Stomach (tissue), 19 donors: ENCODE measurements at regions of chr19 and their contacts with region 1.

Region 1: GRCh38 chr19:33143897-33144405 is 12.0 kb downstream of the WDR88 start:
- DNase-seq: peak; percentile 73 to 87
- H3K4me3 ChIP-seq: no peak overlapping the region
- H3K27ac ChIP-seq: no peak overlapping the region
- H3K4me1 ChIP-seq: peaks cover 0 to 7% (median 3%) of the 10 kb centered on the region in 4 donors
- H3K27me3 ChIP-seq: peaks cover 0 to 17% (median 0%) of the 10 kb centered on the region in 3 donors
- CTCF ChIP-seq: peak in 5 of 7 experiments; percentile 79 to 97 (median 93)
- EP300 ChIP-seq: no peak
- POLR2A ChIP-seq: no peak

Region 2: DNA sequence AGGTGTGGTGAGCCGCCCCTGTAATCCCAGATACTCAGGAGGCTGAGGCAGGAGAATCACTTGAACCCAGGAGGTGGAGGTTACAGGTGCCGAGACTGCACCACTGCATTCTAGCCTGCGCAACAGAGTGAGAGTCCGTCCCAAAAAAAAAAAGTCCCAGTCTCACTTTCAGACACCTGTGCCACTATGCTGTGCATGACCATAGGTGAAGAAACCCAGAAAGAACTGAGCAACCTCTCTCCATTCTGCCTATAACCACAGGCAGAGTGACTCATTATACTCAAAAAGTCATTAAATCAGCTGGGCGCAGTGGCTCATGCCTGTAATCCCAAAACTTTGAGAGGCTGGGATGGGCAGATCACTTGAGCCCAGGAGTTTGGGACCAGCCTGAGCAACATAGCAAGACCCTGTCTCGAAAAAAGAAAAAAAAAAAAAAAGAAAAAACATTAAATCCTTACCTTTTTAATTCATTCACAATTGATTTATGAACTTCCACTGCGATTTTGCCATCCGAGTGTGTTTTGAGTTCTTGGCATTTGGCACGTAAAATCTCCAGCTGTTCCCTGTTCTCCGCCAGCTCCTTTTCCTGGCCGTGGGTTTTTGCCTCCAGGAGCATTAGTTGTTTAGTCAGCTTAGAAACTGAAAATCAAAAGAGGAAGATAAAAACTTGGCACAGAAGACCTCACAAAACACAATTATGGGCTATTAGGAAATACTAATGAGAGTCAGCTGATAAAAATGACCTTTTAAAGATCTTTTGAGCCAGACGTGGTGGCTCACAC is 228.9 kb before region 1 on chr19:
- intact Hi-C with region 1: no loop called
- DNase-seq: no peak
- H3K4me3 ChIP-seq: no peak overlapping the region
- H3K27ac ChIP-seq: no peak overlapping the region
- H3K4me1 ChIP-seq: no peaks in the 10 kb centered on the region
- H3K27me3 ChIP-seq: no peaks in the 10 kb centered on the region
- CTCF ChIP-seq: no peak
- EP300 ChIP-seq: no peak
- POLR2A ChIP-seq: no peak

Region 3: DNA sequence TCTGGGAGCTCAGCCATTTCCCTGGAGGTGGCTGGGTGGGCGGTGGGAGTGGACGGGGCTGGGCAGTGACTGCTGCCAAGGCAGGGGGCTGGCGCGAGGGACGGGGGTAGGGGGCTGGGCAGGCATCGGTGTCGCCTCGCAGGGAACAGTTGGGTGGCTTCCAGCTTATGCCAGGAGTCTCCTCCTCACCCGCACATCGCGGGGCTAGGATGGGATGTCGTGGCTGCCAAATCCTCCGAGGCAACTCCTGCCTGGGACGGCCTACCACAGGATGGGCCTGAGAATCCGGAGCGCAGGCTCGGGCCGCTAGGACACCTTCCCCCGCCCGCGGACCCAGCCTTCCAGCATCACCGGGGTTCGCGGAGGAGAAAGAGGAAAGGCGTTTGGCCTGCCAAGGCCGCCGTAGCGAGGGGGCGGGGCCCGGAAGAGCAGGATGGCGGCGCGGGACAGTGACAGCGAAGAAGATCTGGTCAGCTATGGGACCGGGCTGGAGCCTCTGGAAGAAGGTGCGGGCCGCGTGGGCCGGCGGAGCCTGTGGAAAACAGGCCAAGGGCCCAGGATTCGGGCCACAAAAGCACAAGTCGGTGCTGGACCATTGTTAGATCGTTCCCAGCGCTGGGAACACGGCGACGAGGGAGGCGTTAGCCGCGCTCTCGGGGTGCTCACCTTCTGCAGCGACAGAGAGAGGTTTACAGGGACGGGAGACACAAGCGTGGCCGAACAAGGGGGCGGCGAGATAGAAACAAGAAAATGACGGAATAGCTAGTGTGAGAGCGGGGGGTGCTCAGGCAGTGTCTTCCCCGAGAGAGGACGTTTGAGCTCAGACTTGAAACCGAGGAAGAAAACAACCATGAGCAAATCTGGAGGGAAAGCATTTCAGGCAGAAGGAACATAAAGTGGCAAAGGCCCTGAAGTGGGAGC is 62.9 kb before region 1 on chr19 and contains the start of gene GPATCH1:
- intact Hi-C with region 1: no loop called
- DNase-seq: peak; percentile 91 to 95
- H3K4me3 ChIP-seq: peak within 1 kb of the TSS; percentile 75 to 99 (median 88)
- H3K27ac ChIP-seq: peak within 1 kb of the TSS; percentile 65 to 86 (median 82)
- H3K4me1 ChIP-seq: peaks cover 12 to 46% (median 28%) of the 10 kb centered on the region in 4 donors
- H3K27me3 ChIP-seq: no peaks in the 10 kb centered on the region
- CTCF ChIP-seq: no peak
- EP300 ChIP-seq: no peak
- POLR2A ChIP-seq: no peak
- total RNA-seq, gene GPATCH1: 1.2 to 31.5 (median 9.5) TPM

Region 4: DNA sequence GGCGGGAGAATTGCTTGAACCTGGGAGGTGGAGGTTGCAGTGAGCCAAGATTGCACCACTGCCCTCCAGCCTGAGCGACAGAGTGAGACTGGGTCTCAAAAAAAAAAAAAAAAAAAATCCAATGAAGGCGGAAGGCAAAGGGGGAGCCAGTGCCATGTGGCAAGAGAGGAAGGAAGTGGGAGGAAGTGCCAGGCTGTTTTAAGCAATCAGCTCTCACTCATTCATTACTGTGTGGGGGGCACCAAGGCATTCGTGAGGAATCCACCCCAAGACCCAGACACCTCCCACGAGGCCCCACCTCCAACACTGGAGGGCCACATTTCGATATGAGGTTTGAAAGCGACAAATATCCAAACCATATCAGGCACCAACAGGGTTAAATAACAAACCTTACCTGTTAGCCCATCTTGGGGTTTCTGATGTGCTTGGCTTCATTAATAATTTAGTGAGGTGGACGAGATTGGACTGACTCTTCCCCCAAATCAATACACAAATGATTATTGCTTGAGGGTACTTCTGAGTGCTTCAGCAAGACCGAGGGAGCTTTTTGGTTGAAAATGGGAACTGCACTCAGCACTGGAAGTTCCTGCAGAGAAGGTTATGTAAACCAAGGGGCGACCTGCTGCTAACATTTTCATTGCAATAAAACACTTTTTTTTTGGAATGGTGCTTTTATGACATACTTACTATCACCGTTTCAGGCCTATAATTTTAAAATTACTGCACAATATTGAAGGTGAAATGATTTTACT is 42.7 kb after region 1 on chr19:
- intact Hi-C with region 1: loop called (anchors 2 kb)
- DNase-seq: no peak
- H3K4me3 ChIP-seq: no peak overlapping the region
- H3K27ac ChIP-seq: no peak overlapping the region
- H3K4me1 ChIP-seq: peaks cover 0 to 10% (median 8%) of the 10 kb centered on the region in 4 donors
- H3K27me3 ChIP-seq: no peaks in the 10 kb centered on the region
- CTCF ChIP-seq: no peak
- EP300 ChIP-seq: no peak
- POLR2A ChIP-seq: no peak

Region 5: GRCh38 chr19:33208904-33209849 is 65.2 kb after region 1 on chr19:
- intact Hi-C with region 1: no loop called
- DNase-seq: no peak
- H3K4me3 ChIP-seq: no peak overlapping the region
- H3K27ac ChIP-seq: no peak overlapping the region
- H3K4me1 ChIP-seq: no peaks in the 10 kb centered on the region
- H3K27me3 ChIP-seq: no peaks in the 10 kb centered on the region
- CTCF ChIP-seq: no peak
- EP300 ChIP-seq: no peak
- POLR2A ChIP-seq: no peak